AG04450 (cell line): ENCODE measurements at regions of chr4 and their contacts with region 1.

Region 1: GRCh38 chr4:119628308-119629141 is at the start of gene PDE5A:
- DNase-seq: peak; percentile 63
- H3K4me3 ChIP-seq: peak within 1 kb of the TSS; percentile 85
- H3K27ac ChIP-seq: peak within 1 kb of the TSS; percentile 94
- H3K27me3 ChIP-seq: no peaks in the 10 kb centered on the region
- CTCF ChIP-seq: peak; percentile 69
- polyA plus RNA-seq, gene PDE5A: 411 and 489 TPM in 2 replicates

Region 2: GRCh38 chr4:119261986-119262385 is 366.5 kb before region 1 on chr4:
- CTCF ChIA-PET with region 1: no interaction called
- POLR2A ChIA-PET with region 1: no interaction called
- DNase-seq: no peak
- H3K4me3 ChIP-seq: no peak overlapping the region
- H3K27ac ChIP-seq: no peak overlapping the region
- H3K27me3 ChIP-seq: no peaks in the 10 kb centered on the region
- CTCF ChIP-seq: no peak

Region 3: GRCh38 chr4:119337010-119337409 is 291.5 kb before region 1 on chr4:
- CTCF ChIA-PET with region 1: no interaction called
- POLR2A ChIA-PET with region 1: no interaction called
- DNase-seq: no peak
- H3K4me3 ChIP-seq: no peak overlapping the region
- H3K27ac ChIP-seq: no peak overlapping the region
- H3K27me3 ChIP-seq: no peaks in the 10 kb centered on the region
- CTCF ChIP-seq: no peak

Region 4: GRCh38 chr4:119471259-119471658 is 157.3 kb before region 1 on chr4:
- CTCF ChIA-PET with region 1: no interaction called
- POLR2A ChIA-PET with region 1: no interaction called
- DNase-seq: no peak
- H3K4me3 ChIP-seq: no peak overlapping the region
- H3K27ac ChIP-seq: no peak overlapping the region
- H3K27me3 ChIP-seq: no peaks in the 10 kb centered on the region
- CTCF ChIP-seq: no peak

Region 5: GRCh38 chr4:119641765-119642164 is 13.2 kb after region 1 on chr4:
- CTCF ChIA-PET with region 1: interaction called, 11 read pairs
- POLR2A ChIA-PET with region 1: interaction called, 3 read pairs
- DNase-seq: no peak
- H3K4me3 ChIP-seq: no peak overlapping the region
- H3K27ac ChIP-seq: no peak overlapping the region
- H3K27me3 ChIP-seq: no peaks in the 10 kb centered on the region
- CTCF ChIP-seq: no peak

Region 6: DNA sequence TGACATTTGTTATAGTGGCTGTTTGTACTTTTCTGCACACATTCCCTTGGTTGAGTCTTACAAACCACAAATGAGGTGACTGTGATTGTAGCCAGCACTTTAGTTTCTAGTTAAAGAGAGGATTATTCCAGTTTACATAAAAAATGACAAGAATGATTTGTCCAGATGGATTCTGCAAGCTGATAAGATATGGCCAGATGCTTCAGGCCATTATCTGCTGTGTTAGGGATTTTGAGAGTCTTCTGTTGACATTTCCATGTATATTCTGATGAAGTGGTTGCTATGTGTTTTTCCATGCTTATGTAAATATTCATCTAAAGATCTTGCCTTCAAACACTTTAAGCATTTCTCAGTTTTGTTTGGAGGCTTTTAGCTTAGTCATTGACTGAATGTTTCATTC is 31.1 kb after region 1 on chr4:
- CTCF ChIA-PET with region 1: interaction called, 15 read pairs
- POLR2A ChIA-PET with region 1: interaction called, 23 read pairs
- DNase-seq: no peak
- H3K4me3 ChIP-seq: no peak overlapping the region
- H3K27ac ChIP-seq: no peak overlapping the region
- H3K27me3 ChIP-seq: no peaks in the 10 kb centered on the region
- CTCF ChIP-seq: no peak

Region 7: GRCh38 chr4:119729835-119730670 is 101.5 kb after region 1 on chr4:
- CTCF ChIA-PET with region 1: interaction called, 15 read pairs
- POLR2A ChIA-PET with region 1: interaction called, 60 read pairs
- DNase-seq: peak; percentile 84
- H3K4me3 ChIP-seq: no peak overlapping the region
- H3K27ac ChIP-seq: peak overlapping the region; percentile 63
- H3K27me3 ChIP-seq: no peaks in the 10 kb centered on the region
- CTCF ChIP-seq: no peak

Region 8: GRCh38 chr4:119835613-119835910 is 207.0 kb after region 1 on chr4:
- CTCF ChIA-PET with region 1: interaction called, 10 read pairs
- POLR2A ChIA-PET with region 1: interaction called, 3 read pairs
- DNase-seq: peak; percentile 36
- H3K4me3 ChIP-seq: no peak overlapping the region
- H3K27ac ChIP-seq: no peak overlapping the region
- H3K27me3 ChIP-seq: no peaks in the 10 kb centered on the region
- CTCF ChIP-seq: no peak

Region 9: GRCh38 chr4:120056246-120056645 is 427.7 kb after region 1 on chr4:
- CTCF ChIA-PET with region 1: interaction called, 175 read pairs
- POLR2A ChIA-PET with region 1: interaction called, 19 read pairs
- DNase-seq: no peak
- H3K4me3 ChIP-seq: no peak overlapping the region
- H3K27ac ChIP-seq: no peak overlapping the region
- H3K27me3 ChIP-seq: no peaks in the 10 kb centered on the region
- CTCF ChIP-seq: peak; percentile 38; the same call in 1 of the 2 replicates